Lower leg skin (tissue), 4 donors: ENCODE measurements at regions of chr2 and their contacts with region 1.

Region 1: DNA sequence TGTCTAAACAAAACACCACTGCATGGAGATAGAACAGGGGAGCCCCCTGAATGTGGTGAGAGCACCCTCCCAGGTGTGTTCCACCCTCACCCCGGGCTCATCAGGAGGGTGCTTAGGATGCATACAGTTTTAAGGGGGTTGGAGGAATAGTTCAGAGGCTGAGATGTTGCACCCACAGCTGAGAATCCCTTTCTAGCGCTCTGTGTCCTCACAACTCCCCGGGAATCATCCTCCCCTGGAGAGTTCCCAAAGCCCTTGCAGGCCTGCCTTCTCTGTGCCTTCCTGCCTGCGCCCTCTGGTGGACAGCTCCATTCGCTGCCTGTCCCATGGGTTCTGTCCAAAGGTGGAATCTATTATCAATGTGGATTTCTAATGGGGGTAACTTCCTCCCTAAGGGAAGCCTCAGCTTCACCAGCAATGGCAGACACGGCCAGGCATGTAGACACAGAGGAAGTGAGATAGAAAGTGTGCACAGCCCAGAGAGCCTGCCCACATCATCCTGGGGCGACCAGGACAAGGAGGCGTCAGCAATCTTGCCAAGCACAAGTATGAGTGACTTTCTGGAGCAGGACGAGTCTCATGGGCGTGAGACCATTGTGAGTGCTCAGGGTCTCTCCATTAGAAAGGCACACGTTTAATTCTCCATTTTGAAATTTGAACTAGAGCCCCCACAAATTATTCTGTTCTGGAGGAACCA is 1.2 kb upstream of the UGT1A5 start:
- DNase-seq: peak; percentile 73 to 92
- H3K4me3 ChIP-seq: no peak overlapping the region
- CTCF ChIP-seq: no peak
- POLR2A ChIP-seq: no peak

Region 2: DNA sequence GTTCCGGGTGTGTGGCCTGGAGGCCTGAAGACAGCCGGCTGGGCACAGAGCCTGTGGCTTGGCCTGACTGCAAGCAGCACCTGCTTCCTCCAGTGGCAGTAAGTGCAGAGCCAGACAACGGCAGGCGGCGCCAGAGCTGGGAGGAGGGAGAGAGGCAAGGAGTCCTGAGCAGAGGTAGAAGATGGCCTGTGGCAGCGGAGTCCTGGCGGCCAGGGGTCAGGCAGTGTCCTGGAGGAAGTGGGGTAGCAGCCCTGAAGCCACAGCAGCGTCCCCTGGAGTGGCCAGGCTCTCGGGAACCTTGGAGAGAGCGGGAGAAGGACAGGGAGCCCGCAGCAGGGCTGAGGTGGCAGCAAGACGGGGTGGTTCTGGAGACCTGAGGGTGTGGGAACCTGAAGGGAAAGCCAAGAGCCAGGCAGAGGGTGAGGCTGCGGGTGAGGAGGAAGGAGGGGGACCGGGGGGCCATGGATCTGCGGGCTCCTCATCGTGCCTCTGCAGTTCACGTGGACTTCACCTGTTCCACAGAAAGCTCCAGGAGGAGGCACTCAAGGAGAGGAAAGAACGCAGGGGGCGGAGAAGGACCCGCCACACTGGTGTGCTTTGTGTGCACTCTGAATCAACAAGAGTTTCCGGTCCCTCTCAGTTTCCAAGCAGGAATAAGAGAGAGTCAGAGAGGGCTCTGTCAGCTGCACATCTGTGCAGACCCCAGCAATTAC is 230.8 kb before region 1 on chr2:
- intact Hi-C with region 1: loop called (anchors 5 kb)
- DNase-seq: peak; percentile 18 to 89
- H3K4me3 ChIP-seq: no peak overlapping the region
- CTCF ChIP-seq: no peak
- POLR2A ChIP-seq: no peak